Breast epithelium (tissue), 4 donors: ENCODE measurements at regions of chr12 and their contacts with region 1.

Region 1: GRCh38 chr12:97167598-97167997 is 260.5 kb downstream of the NEDD1 start:
- DNase-seq: no peak
- H3K4me3 ChIP-seq: no peak overlapping the region
- H3K27ac ChIP-seq: no peak overlapping the region
- H3K4me1 ChIP-seq: no peaks in the 10 kb centered on the region
- H3K27me3 ChIP-seq: no peaks in the 10 kb centered on the region
- CTCF ChIP-seq: no peak
- POLR2A ChIP-seq: no peak

Region 2: DNA sequence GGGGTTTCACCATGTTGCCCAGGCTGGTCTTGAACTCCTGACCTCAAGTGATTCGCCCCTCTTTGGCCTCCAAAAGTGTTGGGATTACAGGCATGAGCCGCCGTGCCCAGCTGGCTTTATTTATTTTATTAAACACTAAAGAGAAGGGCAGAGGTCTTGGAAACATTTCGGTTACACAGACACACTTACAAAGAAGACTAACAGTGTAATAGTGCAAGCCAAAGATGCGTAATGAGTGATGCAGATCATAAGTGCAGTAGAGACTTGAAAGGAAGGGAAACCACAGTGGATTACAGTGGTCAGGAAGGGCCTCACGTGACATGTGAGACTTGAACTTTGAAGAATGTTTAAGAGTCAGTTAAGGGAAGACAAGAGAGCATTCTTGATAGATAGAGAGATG is 733.5 kb before region 1 on chr12:
- intact Hi-C with region 1: loop called (anchors 10 kb)
- DNase-seq: no peak
- H3K4me3 ChIP-seq: no peak overlapping the region
- H3K27ac ChIP-seq: no peak overlapping the region
- H3K4me1 ChIP-seq: no peaks in the 10 kb centered on the region
- H3K27me3 ChIP-seq: no peaks in the 10 kb centered on the region
- CTCF ChIP-seq: no peak
- POLR2A ChIP-seq: no peak